ENCODE measurements at regions of chr17 and their contacts with region 1.

Region 1: DNA sequence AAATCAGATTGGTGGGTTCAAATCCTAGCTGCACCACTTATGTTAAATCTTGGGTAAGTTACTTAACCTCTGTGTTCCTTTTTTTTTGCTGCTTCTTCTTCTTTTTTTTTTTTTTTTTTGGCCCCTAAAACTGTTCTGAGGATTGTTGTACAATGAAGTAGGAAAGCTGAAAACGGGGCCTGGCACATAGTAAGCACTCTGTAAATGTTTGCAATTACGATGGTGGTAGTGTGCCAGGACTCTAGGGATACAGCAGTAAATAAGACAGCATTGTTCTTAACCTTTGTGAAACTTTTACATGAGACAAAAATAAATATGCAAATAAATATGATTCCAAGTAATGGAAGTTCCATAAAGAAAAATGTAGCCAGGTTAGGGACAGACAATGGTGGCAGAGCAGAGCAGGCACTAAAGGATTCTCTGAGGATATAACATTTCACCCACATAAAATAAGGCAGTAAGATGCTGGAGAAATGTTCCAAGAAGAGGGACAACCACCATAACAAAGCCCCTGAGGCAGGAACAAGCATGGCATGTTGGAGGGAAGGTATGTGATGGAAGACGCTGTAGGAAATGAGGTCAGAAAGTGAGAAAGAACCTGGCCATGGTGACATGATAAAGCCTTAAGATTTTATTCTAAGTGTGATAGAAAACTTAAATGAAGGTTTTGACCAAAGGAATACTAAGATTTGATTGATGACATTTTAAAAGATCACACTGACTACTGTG is 127.3 kb downstream of the NLK start:
- DNase-seq: no peak
- ATAC-seq: no peak

Region 2: DNA sequence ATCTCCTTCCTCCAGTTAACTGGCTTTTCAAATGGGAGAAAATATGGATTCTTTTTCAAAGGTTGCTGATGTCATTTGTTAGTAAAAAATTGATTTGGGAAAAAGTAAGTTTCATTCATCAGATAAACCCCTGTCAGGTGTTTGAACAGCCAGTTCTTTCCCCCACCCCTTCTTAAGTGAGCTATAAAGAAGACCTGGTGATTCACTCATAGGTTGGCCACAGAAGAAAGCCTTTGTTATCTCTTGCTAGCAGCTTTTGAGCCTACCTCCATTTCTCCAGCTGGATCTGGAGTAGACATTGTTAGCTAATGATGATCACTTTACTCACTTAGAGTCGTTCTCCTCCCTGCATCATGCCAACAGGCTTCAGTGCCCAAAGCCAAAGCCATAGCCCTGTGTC is 64.3 kb before region 1 on chr17:
- intact Hi-C with region 1: loop called in 1 of 2 experiments (anchors 10 kb)
- DNase-seq: no peak
- ATAC-seq: no peak